ENCODE measurements at regions of chr5 and their contacts with region 1.

Region 1: DNA sequence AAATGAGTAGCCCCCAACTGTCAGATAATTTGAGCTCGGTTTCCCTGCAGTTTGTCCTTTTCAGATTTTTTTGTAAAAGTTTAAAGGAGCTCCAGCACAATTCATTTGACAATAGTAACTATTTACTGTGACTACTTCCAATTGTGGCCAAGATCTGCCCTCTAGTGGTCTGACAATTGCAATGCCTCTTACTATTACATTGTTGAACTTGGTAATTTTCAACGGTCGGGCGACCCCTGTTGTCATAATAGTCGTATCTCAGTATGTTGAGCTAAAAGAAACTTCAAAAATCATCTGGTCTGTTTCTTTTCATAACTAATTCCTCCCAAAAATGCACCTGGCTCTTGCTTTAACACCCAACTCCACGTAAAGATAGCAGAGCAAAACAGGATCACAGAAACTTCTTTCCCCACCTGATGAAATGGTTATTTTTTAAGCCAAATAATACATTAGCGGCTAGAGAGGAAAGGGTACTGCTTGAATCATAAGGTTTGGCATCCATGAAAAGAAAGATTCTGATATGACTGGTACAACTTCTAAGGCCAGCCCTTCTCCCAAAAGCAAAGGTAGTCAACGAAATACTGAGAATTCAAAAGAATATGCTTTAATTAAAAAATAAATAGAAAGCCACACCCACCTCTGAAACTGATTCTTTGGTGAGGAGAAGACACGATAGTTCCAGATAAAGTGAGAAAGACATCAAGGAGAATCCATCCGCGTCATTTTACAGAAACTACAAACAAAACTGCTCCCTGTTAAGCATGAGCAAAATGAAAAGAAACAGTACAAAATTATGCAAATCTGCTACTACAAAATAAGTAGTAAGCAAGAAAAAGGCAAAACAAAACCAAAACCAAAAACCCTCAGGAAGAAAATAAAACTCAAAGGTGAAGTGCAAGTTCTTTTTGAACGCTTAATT is 76.9 kb upstream of the HTR4 start:
- DNase-seq: peak; percentile 76
- H3K4me3 Mint-ChIP-seq: peak overlapping the region; percentile 78
- H3K27ac Mint-ChIP-seq: peak overlapping the region; percentile 77
- H3K4me1 Mint-ChIP-seq: peaks cover 19% of the 10 kb centered on the region
- H3K27me3 Mint-ChIP-seq: peaks cover 12% of the 10 kb centered on the region

Region 2: DNA sequence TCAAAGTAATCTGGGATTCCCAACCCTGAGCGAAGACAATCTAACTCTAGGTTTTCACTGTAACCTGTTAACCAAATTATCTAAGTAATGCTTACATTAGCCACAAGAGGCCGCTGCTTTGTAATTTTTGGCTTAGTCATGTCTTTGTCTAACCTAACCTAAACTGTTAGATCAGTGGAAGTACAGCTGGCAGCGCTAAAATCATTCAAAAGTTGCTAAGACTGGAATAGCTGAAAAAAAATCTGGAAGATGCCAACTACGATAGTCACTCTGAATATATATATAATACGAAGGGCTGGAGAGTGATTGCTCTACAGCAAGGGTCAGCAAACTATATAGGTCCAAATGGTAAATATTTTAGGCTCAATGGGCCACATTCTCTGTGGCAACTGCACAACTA is 287.2 kb before region 1 on chr5:
- CTCF ChIA-PET with region 1: interaction called, 136 read pairs
- POLR2A ChIA-PET with region 1: no interaction called
- DNase-seq: peak; percentile 32
- H3K4me3 Mint-ChIP-seq: no peak overlapping the region
- H3K27ac Mint-ChIP-seq: no peak overlapping the region
- H3K4me1 Mint-ChIP-seq: no peaks in the 10 kb centered on the region
- H3K27me3 Mint-ChIP-seq: no peaks in the 10 kb centered on the region

Region 3: DNA sequence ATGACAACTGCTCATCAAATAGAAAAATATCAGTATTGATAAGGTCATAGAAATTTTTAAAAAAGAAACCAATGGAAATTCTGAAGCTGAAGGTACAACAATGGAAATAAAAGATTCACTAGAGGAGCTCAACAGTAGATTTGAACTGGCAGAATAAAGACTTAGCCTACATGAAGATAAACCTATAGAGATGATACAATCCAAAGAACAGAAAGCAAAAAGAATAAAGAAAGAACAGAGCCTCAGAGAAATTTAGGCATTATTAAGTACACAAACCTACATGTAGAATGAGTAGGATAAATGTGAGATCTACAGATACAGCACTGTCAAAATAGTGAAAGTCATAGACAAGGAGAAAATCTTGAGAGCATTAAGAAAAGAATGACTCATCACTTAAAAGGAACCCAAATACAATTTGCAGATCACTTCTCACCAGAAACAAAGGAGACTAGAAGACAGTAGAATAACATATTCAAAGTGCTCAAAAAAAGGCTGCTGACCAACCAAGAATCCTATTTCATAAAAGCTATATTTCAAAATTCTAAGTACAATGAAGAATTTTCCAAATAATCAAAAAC is 29.1 kb before region 1 on chr5:
- CTCF ChIA-PET with region 1: interaction called, 10 read pairs
- POLR2A ChIA-PET with region 1: no interaction called
- DNase-seq: no peak
- H3K4me3 Mint-ChIP-seq: no peak overlapping the region
- H3K27ac Mint-ChIP-seq: no peak overlapping the region
- H3K4me1 Mint-ChIP-seq: no peaks in the 10 kb centered on the region
- H3K27me3 Mint-ChIP-seq: peaks cover 8% of the 10 kb centered on the region

Region 4: GRCh38 chr5:148719605-148720004 is 11.6 kb before region 1 on chr5:
- CTCF ChIA-PET with region 1: interaction called, 22 read pairs
- POLR2A ChIA-PET with region 1: no interaction called
- DNase-seq: no peak
- H3K4me3 Mint-ChIP-seq: no peak overlapping the region
- H3K27ac Mint-ChIP-seq: no peak overlapping the region
- H3K4me1 Mint-ChIP-seq: peaks cover 3% of the 10 kb centered on the region
- H3K27me3 Mint-ChIP-seq: peaks cover 21% of the 10 kb centered on the region

Region 5: DNA sequence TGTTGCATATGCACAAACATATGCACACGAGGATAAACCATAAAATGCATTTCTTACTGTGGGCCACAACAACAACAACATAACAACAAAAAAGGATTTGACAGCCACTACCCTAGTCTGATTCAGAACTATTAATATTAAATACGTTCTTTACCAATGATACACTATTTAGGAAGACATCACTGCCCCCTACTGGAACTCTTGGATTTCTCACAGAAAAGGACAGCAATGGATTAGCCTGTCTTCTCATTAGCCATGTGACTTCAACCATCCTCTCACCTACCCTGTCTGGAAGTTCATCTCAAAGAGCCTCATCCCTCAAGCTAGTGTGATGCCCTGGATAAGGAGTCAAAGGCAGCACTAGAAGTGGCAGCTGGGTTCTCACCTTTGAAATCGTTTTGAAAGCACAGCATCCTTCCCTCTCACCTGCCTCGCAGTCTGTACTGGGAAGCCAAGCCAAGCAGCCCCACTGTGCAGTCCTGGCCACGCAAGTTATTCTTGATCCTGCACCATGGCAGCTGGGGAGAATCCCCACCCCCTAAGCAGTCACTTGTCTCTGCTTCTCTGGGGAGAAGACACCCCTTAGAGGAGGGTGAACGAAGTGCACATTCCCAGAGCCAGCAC is 267.1 kb after region 1 on chr5:
- CTCF ChIA-PET with region 1: interaction called, 48 read pairs
- POLR2A ChIA-PET with region 1: no interaction called
- DNase-seq: peak; percentile 23
- H3K4me3 Mint-ChIP-seq: no peak overlapping the region
- H3K27ac Mint-ChIP-seq: no peak overlapping the region
- H3K4me1 Mint-ChIP-seq: no peaks in the 10 kb centered on the region
- H3K27me3 Mint-ChIP-seq: peaks cover 34% of the 10 kb centered on the region

Region 6: DNA sequence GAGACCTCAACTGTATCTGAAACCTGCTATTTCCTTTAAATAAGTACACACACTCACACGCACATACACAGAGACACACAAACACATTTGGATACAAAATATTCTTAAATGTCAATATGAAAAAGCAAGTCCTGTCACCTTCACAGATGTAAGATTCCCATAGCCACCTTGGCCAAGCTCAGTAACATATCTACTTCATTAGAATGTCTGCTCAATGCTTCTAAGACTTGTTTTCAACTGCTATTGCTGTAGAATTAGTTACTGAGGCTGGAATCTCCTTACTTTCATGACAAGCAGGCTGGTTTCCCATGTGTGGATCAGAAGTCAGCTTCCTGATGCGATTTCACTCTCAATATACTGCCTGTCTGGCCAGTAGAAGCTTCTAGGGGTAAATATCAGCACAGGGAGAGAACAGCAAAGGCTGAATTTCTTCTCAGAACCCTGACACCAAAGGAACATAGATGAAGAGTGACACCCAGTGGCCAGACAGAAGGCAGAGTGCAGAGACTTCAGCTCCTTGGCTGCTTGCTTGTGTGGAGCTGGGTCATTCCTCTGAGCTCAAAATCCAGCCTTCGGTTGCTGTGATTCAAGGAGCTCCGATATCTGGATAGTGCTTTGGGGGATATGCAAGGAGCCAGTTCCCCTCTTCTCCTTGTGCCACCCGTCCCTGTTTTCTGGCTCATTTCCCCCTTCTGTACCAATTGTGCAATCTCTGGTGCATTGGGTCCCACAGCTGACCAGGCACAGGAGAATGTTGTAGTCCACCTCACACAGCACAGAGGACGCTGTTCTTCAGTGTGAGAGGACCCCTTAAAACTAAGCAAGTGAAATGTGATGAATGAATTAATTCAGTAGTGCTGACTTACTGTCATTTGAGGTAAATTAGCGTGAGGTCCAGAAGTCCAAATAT is 383.5 kb after region 1 on chr5:
- CTCF ChIA-PET with region 1: interaction called, 36 read pairs
- POLR2A ChIA-PET with region 1: no interaction called
- DNase-seq: peak; percentile 52
- H3K4me3 Mint-ChIP-seq: no peak overlapping the region
- H3K27ac Mint-ChIP-seq: no peak overlapping the region
- H3K4me1 Mint-ChIP-seq: peaks cover 7% of the 10 kb centered on the region
- H3K27me3 Mint-ChIP-seq: peaks cover 14% of the 10 kb centered on the region

Measured in activated CD4-positive, alpha-beta memory T cell treated with anti-CD3 and anti-CD28 coated beads, Interleukin-2, amount 10 ng/mL, durations not matched to agents 7 days and 5 days (primary cell).